CD8-positive, alpha-beta T cell (primary cell): ENCODE measurements at regions of chr19 and their contacts with region 1.

Region 1: DNA sequence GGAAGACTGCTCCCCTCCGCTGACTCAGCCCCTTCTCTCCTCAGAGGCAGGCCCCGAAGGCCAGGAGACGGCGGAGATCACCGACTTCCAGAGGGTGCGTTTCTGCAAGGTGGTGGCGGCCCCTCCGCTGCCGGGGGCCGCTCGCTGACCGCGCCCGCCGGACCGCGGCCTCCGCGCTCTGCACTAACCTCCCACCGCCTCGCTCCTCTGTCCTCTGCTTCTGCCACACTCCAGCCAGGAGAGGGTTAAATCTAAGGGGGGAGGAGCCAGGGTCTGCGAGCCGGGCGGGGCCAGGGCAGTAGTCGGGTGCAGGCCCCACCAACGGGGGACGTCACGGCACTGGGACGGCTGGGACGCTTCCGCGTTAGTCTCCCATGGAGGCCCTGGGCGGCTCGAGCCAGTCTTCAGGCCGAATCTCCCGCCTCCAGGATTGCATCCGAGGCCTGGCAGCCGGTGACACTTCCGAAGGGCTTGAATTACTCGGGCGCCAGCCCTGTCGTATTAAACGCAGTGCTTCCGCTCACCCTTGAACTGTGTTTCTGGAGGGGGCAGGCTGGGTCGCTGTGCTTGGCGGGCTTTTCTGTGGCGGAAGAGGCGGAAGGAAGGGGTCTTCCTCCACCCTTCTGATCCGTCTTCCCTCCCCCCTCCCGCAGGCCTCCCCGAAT is 1.2 kb upstream of the INAFM1 start:
- DNase-seq: peak; percentile 77 to 93 (median 89)
- ATAC-seq: peak; percentile 56
- H3K4me3 ChIP-seq: peak overlapping the region; percentile 94 to 99
- H3K4me3 Mint-ChIP-seq: peak overlapping the region; percentile 98
- H3K27ac ChIP-seq: peak overlapping the region; percentile 96 to 97
- H3K27ac Mint-ChIP-seq: peak overlapping the region; percentile 97
- H3K4me1 ChIP-seq: peaks cover 18% of the 10 kb centered on the region
- H3K4me1 Mint-ChIP-seq: peaks cover 19% of the 10 kb centered on the region
- H3K27me3 ChIP-seq: no peaks in the 10 kb centered on the region
- H3K27me3 Mint-ChIP-seq: no peaks in the 10 kb centered on the region
- CTCF ChIP-seq: no peak

Region 2: DNA sequence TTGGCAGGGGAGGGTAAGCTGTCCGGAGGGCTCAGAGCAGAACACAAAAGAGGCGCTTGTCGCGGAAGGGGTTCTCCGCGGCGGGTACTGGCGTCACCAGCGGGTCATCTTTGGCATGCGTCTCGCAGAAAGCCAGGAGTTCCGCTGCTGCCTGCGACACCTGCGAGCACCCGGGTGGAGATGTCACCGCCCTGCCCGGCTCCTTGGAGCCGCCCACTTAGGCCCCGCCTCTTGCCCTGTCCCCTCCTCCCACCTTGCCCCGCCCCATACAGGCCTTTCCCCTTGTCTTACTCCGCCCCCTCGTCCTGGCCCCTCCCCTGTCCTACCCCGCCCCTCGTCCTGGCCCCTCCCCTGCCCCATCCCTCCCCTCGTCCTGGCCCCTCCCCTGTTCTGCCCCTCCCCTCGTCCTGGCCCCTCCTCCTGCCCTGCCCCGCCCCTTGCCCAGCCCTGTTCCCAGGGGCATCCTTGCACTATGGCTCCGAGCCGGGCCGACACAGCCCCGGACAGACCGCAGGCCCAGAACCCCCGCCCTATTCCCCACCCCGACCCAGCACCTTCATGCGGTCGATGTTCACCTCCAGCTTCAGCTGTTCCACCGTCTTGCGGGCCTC is 639.3 kb before region 1 on chr19:
- CTCF ChIA-PET with region 1: no interaction called
- POLR2A ChIA-PET with region 1: no interaction called
- intact Hi-C with region 1: loop called in 1 of 2 experiments (anchors 1 kb)
- DNase-seq: peak; percentile 86 to 96 (median 92)
- ATAC-seq: peak; percentile 83
- H3K4me3 ChIP-seq: peak overlapping the region; percentile 40 to 59
- H3K4me3 Mint-ChIP-seq: peak overlapping the region; percentile 80
- H3K27ac ChIP-seq: peak overlapping the region; percentile 35 to 48
- H3K27ac Mint-ChIP-seq: peak overlapping the region; percentile 90
- H3K4me1 ChIP-seq: peaks cover 36% of the 10 kb centered on the region
- H3K4me1 Mint-ChIP-seq: peaks cover 24% of the 10 kb centered on the region
- H3K27me3 ChIP-seq: peaks cover 0 to 24% of the 10 kb centered on the region in 2 experiments
- H3K27me3 Mint-ChIP-seq: no peaks in the 10 kb centered on the region
- CTCF ChIP-seq: no peak

Region 3: DNA sequence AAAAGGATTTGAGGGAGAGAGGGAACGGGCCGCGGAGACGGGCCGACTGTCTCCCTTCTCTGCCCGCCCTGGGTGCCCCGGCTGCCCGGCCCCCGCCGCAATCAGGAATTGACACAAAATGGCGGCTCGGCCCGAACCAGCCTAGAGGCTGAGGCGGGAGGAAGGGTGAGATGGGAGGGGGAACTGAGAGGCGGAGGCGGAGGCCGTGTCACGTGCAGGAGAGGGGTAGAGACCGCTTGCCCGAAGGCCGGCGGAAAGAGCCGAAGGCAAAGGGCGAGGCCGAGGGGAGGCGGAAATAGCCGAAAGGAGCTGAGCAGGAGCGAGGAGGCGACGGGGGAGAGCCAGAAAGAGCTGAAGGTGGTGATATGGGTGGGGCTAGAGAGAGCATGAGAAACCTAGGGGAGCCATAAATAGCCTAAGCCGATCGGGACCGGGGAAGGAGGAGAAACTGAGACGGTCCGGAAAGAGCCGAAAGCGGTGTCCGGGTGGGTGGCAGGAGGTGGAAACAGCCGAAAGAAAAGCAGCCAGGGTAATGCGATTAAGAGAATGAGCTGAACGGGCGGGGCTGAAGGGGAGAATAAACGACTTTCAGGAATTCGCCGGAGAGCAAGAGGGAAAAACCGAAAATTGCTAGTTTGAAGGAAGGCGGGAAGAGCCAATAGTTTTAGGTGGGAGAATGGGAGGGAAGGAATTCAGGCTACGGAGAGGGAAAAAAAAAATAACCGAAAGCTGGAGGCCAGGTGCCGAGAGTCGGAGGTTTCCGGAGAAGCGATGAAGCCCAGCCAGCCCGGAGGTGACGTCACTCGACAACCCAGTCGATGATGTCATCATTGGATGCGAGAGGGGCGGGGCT is 160.2 kb before region 1 on chr19 and contains the start of gene ZC3H4:
- CTCF ChIA-PET with region 1: no interaction called
- POLR2A ChIA-PET with region 1: interaction called, 5 read pairs
- intact Hi-C with region 1: loop called in 1 of 2 experiments (anchors 1 kb)
- DNase-seq: peak; percentile 98 to 100 (median 99)
- ATAC-seq: peak; percentile 82
- H3K4me3 ChIP-seq: peak within 1 kb of the TSS; percentile 83 to 94
- H3K4me3 Mint-ChIP-seq: peak within 1 kb of the TSS; percentile 96
- H3K27ac ChIP-seq: peak within 1 kb of the TSS; percentile 99
- H3K27ac Mint-ChIP-seq: peak within 1 kb of the TSS; percentile 99
- H3K4me1 ChIP-seq: peaks cover 29% of the 10 kb centered on the region
- H3K4me1 Mint-ChIP-seq: peaks cover 32% of the 10 kb centered on the region
- H3K27me3 ChIP-seq: no peaks in the 10 kb centered on the region
- H3K27me3 Mint-ChIP-seq: no peaks in the 10 kb centered on the region
- CTCF ChIP-seq: no peak
- total RNA-seq, gene ZC3H4: 30.0 to 33.0 TPM

Region 4: GRCh38 chr19:47231215-47231984 is 42.0 kb before region 1 on chr19:
- CTCF ChIA-PET with region 1: no interaction called
- POLR2A ChIA-PET with region 1: interaction called, 5 read pairs
- intact Hi-C with region 1: loop called (anchors 1 kb)
- DNase-seq: peak; percentile 80 to 95 (median 93)
- ATAC-seq: peak; percentile 54
- H3K4me3 ChIP-seq: peak overlapping the region; percentile 59 to 66
- H3K4me3 Mint-ChIP-seq: peak overlapping the region; percentile 79
- H3K27ac ChIP-seq: peak overlapping the region; percentile 45 to 83
- H3K27ac Mint-ChIP-seq: peak overlapping the region; percentile 88
- H3K4me1 ChIP-seq: peaks cover 42% of the 10 kb centered on the region
- H3K4me1 Mint-ChIP-seq: peaks cover 28% of the 10 kb centered on the region
- H3K27me3 ChIP-seq: no peaks in the 10 kb centered on the region
- H3K27me3 Mint-ChIP-seq: no peaks in the 10 kb centered on the region
- CTCF ChIP-seq: no peak

Region 5: GRCh38 chr19:47348819-47349795 is 75.7 kb after region 1 on chr19 and contains the start of gene DHX34:
- CTCF ChIA-PET with region 1: interaction called, 7 read pairs
- POLR2A ChIA-PET with region 1: interaction called, 11 read pairs
- intact Hi-C with region 1: loop called (anchors 1 to 2 kb)
- DNase-seq: peak; percentile 98 to 100 (median 99)
- ATAC-seq: peak; percentile 98
- H3K4me3 ChIP-seq: peak within 1 kb of the TSS; percentile 88 to 93
- H3K4me3 Mint-ChIP-seq: peak within 1 kb of the TSS; percentile 98
- H3K27ac ChIP-seq: peak within 1 kb of the TSS; percentile 71 to 72
- H3K27ac Mint-ChIP-seq: peak within 1 kb of the TSS; percentile 91
- H3K4me1 ChIP-seq: peaks cover 25% of the 10 kb centered on the region
- H3K4me1 Mint-ChIP-seq: peaks cover 38% of the 10 kb centered on the region
- H3K27me3 ChIP-seq: no peaks in the 10 kb centered on the region
- H3K27me3 Mint-ChIP-seq: peaks cover 3% of the 10 kb centered on the region
- CTCF ChIP-seq: peak; percentile 72
- total RNA-seq, gene DHX34: 7.7 to 8.1 TPM

Region 6: DNA sequence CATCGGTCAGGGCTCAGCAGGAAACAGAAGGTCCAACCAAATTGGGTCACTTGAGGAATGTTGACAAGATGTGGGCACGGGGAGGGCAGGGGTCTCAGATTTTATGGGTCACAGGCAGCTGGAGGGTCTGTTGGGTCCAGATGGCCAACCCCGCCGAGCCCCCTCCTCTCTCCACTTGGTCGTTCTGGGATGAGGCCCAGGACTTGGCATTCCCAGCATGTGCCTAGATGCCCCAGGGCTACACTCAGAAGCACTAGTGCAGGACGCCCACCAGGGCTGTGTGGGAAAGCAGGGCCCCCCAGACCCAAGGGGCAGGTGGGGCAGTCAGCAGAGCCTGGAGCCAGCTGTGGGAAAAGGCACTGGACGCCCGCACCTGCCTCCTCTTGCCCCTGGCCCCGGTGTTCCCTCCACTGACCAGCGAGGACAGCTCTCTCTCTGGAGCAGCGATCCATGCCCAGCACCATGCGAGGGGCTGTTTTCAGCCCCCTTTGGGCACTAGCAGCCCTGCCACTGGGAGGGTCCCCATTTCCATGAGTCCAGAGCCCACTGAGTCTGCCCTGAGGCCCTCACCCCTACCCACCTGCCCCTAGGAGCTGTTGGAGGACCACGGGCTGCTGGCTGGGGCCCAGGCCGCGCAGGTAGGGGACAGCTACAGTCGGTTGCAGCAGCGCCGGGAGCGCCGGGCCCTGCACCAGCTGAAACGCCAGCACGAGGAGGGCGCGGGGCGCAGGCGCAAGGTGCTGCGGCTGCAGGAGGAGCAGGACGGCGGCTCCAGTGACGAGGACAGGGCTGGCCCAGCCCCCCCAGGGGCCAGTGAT is 101.6 kb after region 1 on chr19:
- CTCF ChIA-PET with region 1: no interaction called
- POLR2A ChIA-PET with region 1: no interaction called
- intact Hi-C with region 1: no loop called
- DNase-seq: no peak
- ATAC-seq: no peak
- H3K4me3 ChIP-seq: no peak overlapping the region
- H3K4me3 Mint-ChIP-seq: no peak overlapping the region
- H3K27ac ChIP-seq: no peak overlapping the region
- H3K27ac Mint-ChIP-seq: no peak overlapping the region
- H3K4me1 ChIP-seq: no peaks in the 10 kb centered on the region
- H3K4me1 Mint-ChIP-seq: peaks cover under 1% of the 10 kb centered on the region
- H3K27me3 ChIP-seq: no peaks in the 10 kb centered on the region
- H3K27me3 Mint-ChIP-seq: no peaks in the 10 kb centered on the region
- CTCF ChIP-seq: no peak

Region 7: GRCh38 chr19:47663841-47664771 is 390.7 kb after region 1 on chr19:
- CTCF ChIA-PET with region 1: no interaction called
- POLR2A ChIA-PET with region 1: no interaction called
- intact Hi-C with region 1: no loop called
- DNase-seq: no peak
- ATAC-seq: no peak
- H3K4me3 ChIP-seq: no peak overlapping the region
- H3K4me3 Mint-ChIP-seq: no peak overlapping the region
- H3K27ac ChIP-seq: no peak overlapping the region
- H3K27ac Mint-ChIP-seq: no peak overlapping the region
- H3K4me1 ChIP-seq: no peaks in the 10 kb centered on the region
- H3K4me1 Mint-ChIP-seq: peaks cover 33% of the 10 kb centered on the region
- H3K27me3 ChIP-seq: no peaks in the 10 kb centered on the region
- H3K27me3 Mint-ChIP-seq: no peaks in the 10 kb centered on the region
- CTCF ChIP-seq: no peak

Region 8: DNA sequence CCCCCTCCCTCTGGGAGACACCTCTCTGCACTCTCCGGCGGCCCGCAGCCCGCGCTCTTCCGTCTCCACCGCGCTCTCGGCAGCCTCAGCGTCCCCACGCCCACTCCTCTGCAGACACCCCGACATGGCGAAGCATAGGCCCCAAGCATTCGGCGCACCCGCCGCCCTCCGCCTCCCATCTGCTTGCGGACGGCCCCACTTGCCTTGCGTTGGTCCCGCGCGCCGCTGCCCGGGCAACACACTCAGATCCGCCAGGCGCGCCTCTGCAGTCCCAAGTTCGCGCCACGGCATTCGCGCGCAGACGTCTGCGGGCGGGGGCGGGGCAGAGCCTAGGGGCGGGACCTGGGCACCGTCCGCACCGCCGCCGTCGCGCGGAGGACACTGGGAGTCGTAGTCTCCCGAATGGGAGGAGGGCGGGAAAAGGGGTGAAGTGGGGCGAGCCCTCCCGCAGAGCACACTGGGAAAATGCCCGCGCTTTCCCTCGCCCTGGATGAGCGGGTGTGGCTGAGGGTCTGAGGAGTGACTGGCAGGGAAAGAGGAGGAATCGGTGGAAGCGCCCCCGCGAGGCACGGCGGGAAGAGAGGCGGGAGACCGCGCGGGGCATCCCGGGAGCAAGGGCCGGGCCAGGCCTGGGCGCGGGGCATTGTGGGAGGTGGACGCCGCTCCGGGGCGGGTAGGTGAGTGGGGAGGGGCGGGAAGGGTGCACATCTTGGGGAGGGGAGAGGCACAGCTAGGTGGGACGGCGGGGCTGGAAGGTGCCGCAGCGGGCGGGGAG is 896.8 kb after region 1 on chr19 and contains the starts of genes LIG1 and ZSWIM9:
- CTCF ChIA-PET with region 1: no interaction called
- POLR2A ChIA-PET with region 1: no interaction called
- intact Hi-C with region 1: loop called in 1 of 2 experiments (anchors 5 kb)
- DNase-seq: peak; percentile 82 to 95 (median 90)
- ATAC-seq: peak; percentile 81
- H3K4me3 ChIP-seq: peak within 1 kb of the TSS; percentile 96 to 100
- H3K4me3 Mint-ChIP-seq: peak within 1 kb of the TSS; percentile 98
- H3K27ac ChIP-seq: peak within 1 kb of the TSS; percentile 82 to 92
- H3K27ac Mint-ChIP-seq: peak within 1 kb of the TSS; percentile 97
- H3K4me1 ChIP-seq: peaks cover 7% of the 10 kb centered on the region
- H3K4me1 Mint-ChIP-seq: peaks cover 22% of the 10 kb centered on the region
- H3K27me3 ChIP-seq: no peaks in the 10 kb centered on the region
- H3K27me3 Mint-ChIP-seq: no peaks in the 10 kb centered on the region
- CTCF ChIP-seq: peak; percentile 25
- total RNA-seq, gene LIG1: 62.5 to 67.5 TPM
- total RNA-seq, gene ZSWIM9: 2.5 to 4.5 TPM